BJ (cell line): ENCODE measurements at regions of chr9 and their contacts with region 1.

Region 1: DNA sequence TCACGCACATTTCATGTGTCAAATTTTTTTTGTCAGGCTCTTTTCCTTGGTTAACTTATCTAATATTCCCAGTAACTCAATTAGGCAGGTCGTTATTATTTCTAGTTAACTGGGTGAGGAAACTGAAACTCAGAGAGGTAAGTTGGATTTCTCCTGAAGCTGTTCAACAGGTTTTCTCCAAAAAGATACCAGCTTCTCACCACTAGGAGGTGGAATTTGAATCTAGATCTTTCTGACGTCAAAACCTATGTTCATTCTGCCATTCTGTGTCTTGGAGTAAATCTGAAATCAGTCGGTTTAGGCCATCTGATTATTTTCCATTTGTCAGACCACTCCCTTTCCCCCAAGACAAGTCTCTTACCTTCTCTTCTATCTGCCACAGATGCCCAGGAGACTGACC is 572.9 kb downstream of the ACTL7B start:
- DNase-seq: no peak
- H3K4me3 ChIP-seq: no peak overlapping the region
- H3K27me3 ChIP-seq: no peaks in the 10 kb centered on the region
- CTCF ChIP-seq: no peak

Region 2: DNA sequence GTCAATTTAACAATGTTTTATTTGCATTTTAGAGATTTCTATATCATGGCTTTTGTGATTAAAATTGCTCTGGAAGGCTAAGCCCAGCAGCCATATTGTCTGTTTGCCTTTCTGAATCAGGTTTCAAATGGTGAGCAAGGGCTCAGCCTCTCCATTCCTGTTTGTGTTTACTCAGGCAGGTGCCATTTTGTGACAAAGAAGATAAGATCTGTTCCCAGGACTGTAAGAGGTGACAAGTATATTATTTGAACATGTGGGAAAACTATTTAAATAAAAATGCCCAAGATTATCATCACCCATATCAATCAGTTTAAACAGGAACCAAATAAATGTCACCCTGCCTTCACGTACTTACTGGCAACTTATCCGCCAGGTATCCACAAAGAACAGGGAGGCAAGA is 152.0 kb before region 1 on chr9:
- CTCF ChIA-PET with region 1: no interaction called
- POLR2A ChIA-PET with region 1: no interaction called
- DNase-seq: no peak
- H3K4me3 ChIP-seq: no peak overlapping the region
- H3K27me3 ChIP-seq: no peaks in the 10 kb centered on the region
- CTCF ChIP-seq: no peak

Region 3: DNA sequence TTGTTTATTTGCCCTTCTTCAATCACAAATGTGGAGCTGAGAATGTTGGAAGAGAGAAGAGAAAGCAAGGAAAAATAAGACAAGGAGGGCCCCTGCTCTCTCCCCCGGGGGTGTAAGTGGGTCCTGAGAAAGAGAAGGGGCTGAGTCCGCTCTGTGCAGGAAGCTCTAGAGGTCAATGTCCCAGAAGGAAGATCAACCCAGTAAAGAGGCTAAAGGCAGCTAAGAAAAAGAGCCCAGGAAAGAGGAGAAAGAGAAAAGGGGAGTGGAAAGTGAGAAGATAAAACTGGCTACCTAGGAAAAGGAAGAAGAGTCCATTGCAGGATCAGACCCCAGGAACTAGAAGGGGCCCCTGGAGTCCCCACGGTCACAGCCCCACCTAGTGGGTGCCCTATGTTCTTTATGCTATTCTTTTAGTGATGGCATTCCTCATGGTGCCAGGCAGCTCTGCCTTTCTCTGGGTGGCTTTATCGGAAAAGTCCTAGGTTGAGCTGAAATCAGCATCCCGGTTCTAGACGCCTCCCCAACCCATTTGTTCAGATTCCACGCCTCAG is 10.4 kb before region 1 on chr9:
- CTCF ChIA-PET with region 1: interaction called, 12 read pairs
- POLR2A ChIA-PET with region 1: no interaction called
- DNase-seq: no peak
- H3K4me3 ChIP-seq: peak overlapping the region; percentile 12; the same call in 1 of the 2 replicates
- H3K27me3 ChIP-seq: no peaks in the 10 kb centered on the region
- CTCF ChIP-seq: peak; percentile 65